CD4-positive, alpha-beta T cell (primary cell): ENCODE measurements at regions of chr1 and their contacts with region 1.

Region 1: GRCh38 chr1:9717193-9718005 is 65.9 kb downstream of the PIK3CD start:
- DNase-seq: peak; percentile 81 to 97 (median 90)
- ATAC-seq: peak; percentile 84
- H3K4me3 ChIP-seq: peak overlapping the region; percentile 91
- H3K4me3 Mint-ChIP-seq: peak overlapping the region; percentile 88
- H3K27ac ChIP-seq: peak overlapping the region; percentile 63 to 89
- H3K27ac Mint-ChIP-seq: peak overlapping the region; percentile 96
- H3K4me1 ChIP-seq: peaks cover 99% of the 10 kb centered on the region
- H3K4me1 Mint-ChIP-seq: peaks cover 52% of the 10 kb centered on the region
- H3K27me3 ChIP-seq: no peaks in the 10 kb centered on the region
- H3K27me3 Mint-ChIP-seq: no peaks in the 10 kb centered on the region
- CTCF ChIP-seq: no peak

Region 2: GRCh38 chr1:9643351-9644256 is 73.8 kb before region 1 on chr1:
- CTCF ChIA-PET with region 1: no interaction called
- POLR2A ChIA-PET with region 1: interaction called, 20 read pairs
- intact Hi-C with region 1: no loop called
- DNase-seq: peak in 4 of 14 experiments; percentile 30 to 41 (median 36)
- ATAC-seq: peak; percentile 46
- H3K4me3 ChIP-seq: no peak overlapping the region
- H3K4me3 Mint-ChIP-seq: peak overlapping the region; percentile 64
- H3K27ac ChIP-seq: peak overlapping the region; percentile 3 to 62
- H3K27ac Mint-ChIP-seq: peak overlapping the region; percentile 80
- H3K4me1 ChIP-seq: peaks cover 81% of the 10 kb centered on the region
- H3K4me1 Mint-ChIP-seq: peaks cover 75% of the 10 kb centered on the region
- H3K27me3 ChIP-seq: no peaks in the 10 kb centered on the region
- H3K27me3 Mint-ChIP-seq: no peaks in the 10 kb centered on the region
- CTCF ChIP-seq: no peak

Region 3: GRCh38 chr1:9689011-9689706 is 28.2 kb before region 1 on chr1:
- CTCF ChIA-PET with region 1: interaction called, 7 read pairs
- POLR2A ChIA-PET with region 1: interaction called, 98 read pairs
- intact Hi-C with region 1: loop called in 1 of 2 experiments (anchors 2 kb)
- DNase-seq: peak; percentile 76 to 92 (median 83)
- ATAC-seq: peak; percentile 78
- H3K4me3 ChIP-seq: peak overlapping the region; percentile 61
- H3K4me3 Mint-ChIP-seq: peak overlapping the region; percentile 88
- H3K27ac ChIP-seq: peak overlapping the region in 1 of 2 donors; percentile 40
- H3K27ac Mint-ChIP-seq: peak overlapping the region; percentile 74
- H3K4me1 ChIP-seq: peaks cover 76% of the 10 kb centered on the region
- H3K4me1 Mint-ChIP-seq: peaks cover 76% of the 10 kb centered on the region
- H3K27me3 ChIP-seq: no peaks in the 10 kb centered on the region
- H3K27me3 Mint-ChIP-seq: no peaks in the 10 kb centered on the region
- CTCF ChIP-seq: no peak

Region 4: DNA sequence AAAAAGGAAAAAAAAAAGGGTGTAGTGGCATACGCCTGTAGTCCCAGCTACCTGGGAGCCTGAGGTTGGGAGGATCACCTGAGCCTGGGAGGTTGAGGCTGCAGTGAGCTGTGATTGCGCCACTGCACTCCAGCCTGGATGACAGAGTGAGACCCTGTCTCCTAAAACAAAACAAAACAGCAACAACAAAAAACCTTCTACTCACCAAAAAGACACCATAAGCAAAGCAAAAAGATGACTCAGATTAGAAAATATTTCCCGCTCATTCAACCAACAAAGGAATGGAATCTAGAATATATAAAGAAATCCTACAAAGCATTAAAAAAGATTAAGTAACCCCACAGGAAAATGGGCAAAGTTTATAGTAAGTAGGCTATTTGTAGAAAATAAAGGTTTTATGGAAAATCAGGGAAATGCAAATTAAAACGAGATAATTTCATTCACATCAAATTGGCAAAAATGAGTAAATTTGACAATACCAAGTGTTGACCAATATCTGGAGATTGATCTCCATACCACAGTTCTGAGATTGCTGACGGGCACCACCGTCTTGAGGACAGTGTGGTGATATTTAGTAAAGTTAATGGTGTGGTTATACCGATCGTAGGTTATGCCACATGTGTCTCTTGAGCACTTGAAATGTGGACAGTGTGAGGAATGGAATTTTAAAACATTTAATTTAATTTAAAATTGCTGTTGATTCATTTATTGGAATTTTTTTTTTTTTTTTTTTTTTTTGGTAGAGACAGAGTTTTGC is 11.9 kb before region 1 on chr1:
- CTCF ChIA-PET with region 1: interaction called, 9 read pairs
- POLR2A ChIA-PET with region 1: interaction called, 22 read pairs
- intact Hi-C with region 1: no loop called
- DNase-seq: no peak
- ATAC-seq: no peak
- H3K4me3 ChIP-seq: no peak overlapping the region
- H3K4me3 Mint-ChIP-seq: peak overlapping the region; percentile 21
- H3K27ac ChIP-seq: no peak overlapping the region
- H3K27ac Mint-ChIP-seq: peak overlapping the region; percentile 75
- H3K4me1 ChIP-seq: peaks cover 76% of the 10 kb centered on the region
- H3K4me1 Mint-ChIP-seq: peaks cover 59% of the 10 kb centered on the region
- H3K27me3 ChIP-seq: no peaks in the 10 kb centered on the region
- H3K27me3 Mint-ChIP-seq: no peaks in the 10 kb centered on the region
- CTCF ChIP-seq: no peak

Region 5: DNA sequence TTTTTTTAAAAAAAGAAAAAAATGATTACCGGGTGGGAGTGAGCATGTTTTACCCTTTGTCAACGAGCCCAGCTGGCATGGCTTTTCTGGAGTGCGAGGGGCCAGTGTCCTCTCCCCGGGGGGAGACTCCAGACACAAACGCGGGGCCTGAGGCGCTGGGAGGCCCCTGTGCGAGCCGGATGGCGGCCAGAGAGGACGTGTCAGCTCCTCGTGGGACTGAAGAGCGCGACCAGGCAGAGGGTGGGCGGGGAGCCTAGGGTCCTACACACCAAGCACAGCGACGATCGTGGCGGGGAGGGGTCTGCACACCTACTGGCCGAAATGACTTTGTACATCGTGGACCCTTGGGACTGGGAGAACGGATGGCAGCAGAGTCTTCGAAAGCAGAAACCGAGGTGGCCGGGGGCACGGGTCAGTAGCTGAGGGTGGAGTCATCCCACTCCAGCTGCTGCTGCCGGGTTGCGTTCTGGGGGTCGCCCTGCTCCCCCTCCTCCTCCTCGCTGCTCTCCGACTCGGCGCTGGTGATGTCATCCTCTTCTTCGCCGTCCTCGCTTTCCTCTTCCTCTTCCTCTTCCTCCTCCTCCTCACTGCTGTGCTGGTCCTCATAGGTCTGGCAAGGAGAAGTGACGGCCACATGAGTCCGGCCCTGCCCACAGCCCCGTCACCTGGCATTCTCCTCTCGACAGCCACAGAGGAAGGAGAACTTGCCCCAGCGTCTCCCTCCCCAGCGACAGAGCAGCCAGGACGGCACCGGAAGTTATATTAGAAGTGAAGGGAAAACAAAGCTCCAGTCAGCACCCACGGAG is 12.9 kb after region 1 on chr1:
- CTCF ChIA-PET with region 1: interaction called, 5 read pairs
- POLR2A ChIA-PET with region 1: interaction called, 69 read pairs
- intact Hi-C with region 1: loop called in 1 of 2 experiments (anchors 1 kb)
- DNase-seq: peak in 3 of 14 experiments; percentile 35 to 63 (median 61)
- ATAC-seq: no peak
- H3K4me3 ChIP-seq: no peak overlapping the region
- H3K4me3 Mint-ChIP-seq: peak overlapping the region; percentile 81
- H3K27ac ChIP-seq: no peak overlapping the region
- H3K27ac Mint-ChIP-seq: peak overlapping the region; percentile 89
- H3K4me1 ChIP-seq: peaks cover 66% of the 10 kb centered on the region
- H3K4me1 Mint-ChIP-seq: peaks cover 68% of the 10 kb centered on the region
- H3K27me3 ChIP-seq: no peaks in the 10 kb centered on the region
- H3K27me3 Mint-ChIP-seq: no peaks in the 10 kb centered on the region
- CTCF ChIP-seq: no peak